ENCODE measurements at regions of chr14 and their contacts with region 1.

Region 1: GRCh38 chr14:24093901-24094761 is at the start of gene PCK2:
- DNase-seq: peak; percentile 88
- H3K4me3 ChIP-seq: peak within 1 kb of the TSS; percentile 81
- H3K27ac ChIP-seq: peak within 1 kb of the TSS; percentile 75
- H3K4me1 ChIP-seq: peaks cover 39% of the 10 kb centered on the region
- CTCF ChIP-seq: peak; percentile 24; the same call in 1 of the 2 replicates
- total RNA-seq, gene PCK2: 33.7 and 43.6 TPM in 2 replicates

Region 2: GRCh38 chr14:24058260-24058950 is 35.7 kb before region 1 on chr14:
- CTCF ChIA-PET with region 1: interaction called, 8 read pairs
- POLR2A ChIA-PET with region 1: interaction called, 4 read pairs
- intact Hi-C with region 1: loop called (anchors 1 kb)
- DNase-seq: peak; percentile 41
- H3K4me3 ChIP-seq: no peak overlapping the region
- H3K27ac ChIP-seq: no peak overlapping the region
- H3K4me1 ChIP-seq: no peaks in the 10 kb centered on the region
- CTCF ChIP-seq: peak; percentile 61

Region 3: GRCh38 chr14:24108336-24108874 is 14.3 kb after region 1 on chr14:
- CTCF ChIA-PET with region 1: interaction called, 8 read pairs
- POLR2A ChIA-PET with region 1: interaction called, 80 read pairs
- intact Hi-C with region 1: loop called (anchors 1 kb)
- DNase-seq: no peak
- H3K4me3 ChIP-seq: no peak overlapping the region
- H3K27ac ChIP-seq: peak overlapping the region; percentile 55
- H3K4me1 ChIP-seq: peaks cover 15% of the 10 kb centered on the region
- CTCF ChIP-seq: no peak

Region 4: DNA sequence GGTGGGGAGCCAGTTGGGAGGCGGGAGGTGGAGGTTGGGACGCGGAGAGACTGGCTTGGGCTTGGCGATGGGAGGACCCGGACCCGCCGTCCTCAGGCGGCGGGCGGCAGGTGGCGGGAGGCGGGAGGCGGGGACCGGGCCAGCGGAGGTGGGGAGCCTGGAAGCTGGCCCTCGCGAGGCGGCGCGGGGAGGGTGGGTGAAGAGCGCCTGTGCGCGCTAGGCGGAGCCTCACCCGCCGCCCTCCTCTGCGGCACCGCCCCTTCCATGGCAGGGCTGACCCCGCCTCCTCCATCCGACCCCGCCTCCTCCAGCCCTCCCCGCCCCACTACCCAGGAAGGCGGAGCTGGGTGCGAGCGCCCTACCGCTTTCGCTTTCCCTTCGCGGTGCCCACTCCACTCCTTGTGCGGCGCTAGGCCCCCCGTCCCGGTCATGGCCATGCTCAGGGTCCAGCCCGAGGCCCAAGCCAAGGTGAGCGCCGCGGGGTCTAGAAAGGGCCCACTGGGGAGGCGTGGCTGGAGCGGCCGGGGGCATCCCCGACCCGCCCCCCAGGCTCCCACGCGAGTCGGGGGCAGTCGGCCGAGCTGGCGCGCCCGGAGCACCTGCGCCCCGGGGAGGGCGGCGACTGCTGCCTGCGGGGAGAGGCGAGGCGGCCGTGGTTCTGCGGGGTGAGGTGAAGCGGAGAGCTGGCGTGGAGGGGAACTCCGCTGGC is 41.9 kb after region 1 on chr14 and contains the start of gene PSME1:
- CTCF ChIA-PET with region 1: no interaction called
- POLR2A ChIA-PET with region 1: interaction called, 16 read pairs
- intact Hi-C with region 1: no loop called
- DNase-seq: peak; percentile 93
- H3K4me3 ChIP-seq: peak within 1 kb of the TSS; percentile 98
- H3K27ac ChIP-seq: peak within 1 kb of the TSS; percentile 46
- H3K4me1 ChIP-seq: peaks cover 40% of the 10 kb centered on the region
- CTCF ChIP-seq: no peak
- total RNA-seq, gene PSME1: 187 and 213 TPM in 2 replicates

Region 5: GRCh38 chr14:24160850-24161804 is 67.0 kb after region 1 on chr14 and contains the start of gene IRF9:
- CTCF ChIA-PET with region 1: interaction called, 4 read pairs
- POLR2A ChIA-PET with region 1: interaction called, 6 read pairs
- intact Hi-C with region 1: loop called (anchors 1 kb)
- DNase-seq: peak; percentile 95
- H3K4me3 ChIP-seq: peak within 1 kb of the TSS; percentile 70
- H3K27ac ChIP-seq: peak within 1 kb of the TSS; percentile 68
- H3K4me1 ChIP-seq: peaks cover 16% of the 10 kb centered on the region
- CTCF ChIP-seq: peak; percentile 95
- total RNA-seq, gene IRF9: 35.1 and 40.7 TPM in 2 replicates